ENCODE measurements at regions of chr14 and their contacts with region 1.

Region 1: GRCh38 chr14:95527387-95528002 is 7.4 kb upstream of the GLRX5 start:
- DNase-seq: peak in 3 of 10 donors; percentile 48 to 56 (median 55)

Region 2: GRCh38 chr14:95442633-95443021 is 84.9 kb before region 1 on chr14:
- intact Hi-C with region 1: loop called (anchors 1 kb)
- DNase-seq: peak; percentile 77 to 98 (median 89)